Left lung (tissue), 14 donors: ENCODE measurements at regions of chr2 and their contacts with region 1.

Region 1: DNA sequence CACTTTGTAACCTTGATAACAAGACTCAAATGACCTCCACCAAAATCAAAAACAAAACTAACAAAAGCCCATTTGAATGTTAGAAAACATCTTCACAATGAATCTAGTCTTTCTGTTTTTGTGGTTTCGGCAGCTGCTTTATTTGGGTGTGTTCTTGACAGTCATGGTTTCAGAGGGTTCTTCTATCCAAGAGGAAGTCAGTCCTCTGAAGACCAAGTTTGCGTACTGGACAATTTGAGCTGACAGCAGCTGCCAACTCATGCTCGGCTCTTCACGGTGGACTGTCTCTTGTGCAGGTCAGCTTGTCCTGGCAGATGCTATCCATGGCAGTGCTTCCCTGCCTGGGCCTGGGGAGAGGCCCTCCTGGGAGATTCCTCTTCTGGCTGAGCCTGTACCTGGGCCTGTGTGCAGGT is 91.0 kb downstream of the TMEM17 start:
- DNase-seq: no peak
- ATAC-seq: no peak
- H3K4me3 ChIP-seq: no peak overlapping the region
- H3K27ac ChIP-seq: no peak overlapping the region
- H3K4me1 ChIP-seq: peaks cover 6 to 12% of the 10 kb centered on the region in 2 donors
- H3K27me3 ChIP-seq: no peaks in the 10 kb centered on the region
- CTCF ChIP-seq: no peak

Region 2: DNA sequence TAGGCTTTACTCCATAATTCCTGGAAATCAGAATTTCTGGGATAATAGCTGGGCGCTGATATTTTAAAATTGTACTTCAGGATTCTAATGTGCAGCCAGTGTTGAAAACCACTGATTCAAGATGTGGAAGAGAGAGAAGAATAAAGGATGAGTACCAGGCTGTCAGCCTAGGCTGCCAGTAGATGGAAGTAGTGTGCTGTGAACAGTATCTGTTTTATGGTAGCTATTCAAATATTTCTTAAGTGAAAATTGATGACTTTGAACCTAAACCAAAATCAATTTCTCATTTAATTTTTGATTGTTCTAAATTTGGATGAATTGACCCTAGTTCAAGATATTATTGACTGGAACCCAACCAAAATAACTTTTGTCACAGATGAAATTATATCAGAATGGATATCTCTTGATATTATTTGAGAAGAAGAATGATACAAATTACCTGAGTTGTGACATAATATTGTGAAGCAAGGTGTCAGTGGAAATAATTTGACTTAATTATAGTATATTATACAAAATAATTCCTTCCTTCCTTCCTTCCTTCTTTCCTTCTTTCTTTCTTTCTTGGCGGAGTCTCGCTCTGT is 421.5 kb before region 1 on chr2:
- intact Hi-C with region 1: loop called in 1 of 2 experiments (anchors 10 kb)
- DNase-seq: peak in 1 of 4 donors; percentile 68
- ATAC-seq: peak; percentile 79
- H3K4me3 ChIP-seq: no peak overlapping the region
- H3K27ac ChIP-seq: no peak overlapping the region
- H3K4me1 ChIP-seq: peaks cover 0 to 12% of the 10 kb centered on the region in 2 donors
- H3K27me3 ChIP-seq: no peaks in the 10 kb centered on the region
- CTCF ChIP-seq: peak; percentile 29 to 44

Region 3: DNA sequence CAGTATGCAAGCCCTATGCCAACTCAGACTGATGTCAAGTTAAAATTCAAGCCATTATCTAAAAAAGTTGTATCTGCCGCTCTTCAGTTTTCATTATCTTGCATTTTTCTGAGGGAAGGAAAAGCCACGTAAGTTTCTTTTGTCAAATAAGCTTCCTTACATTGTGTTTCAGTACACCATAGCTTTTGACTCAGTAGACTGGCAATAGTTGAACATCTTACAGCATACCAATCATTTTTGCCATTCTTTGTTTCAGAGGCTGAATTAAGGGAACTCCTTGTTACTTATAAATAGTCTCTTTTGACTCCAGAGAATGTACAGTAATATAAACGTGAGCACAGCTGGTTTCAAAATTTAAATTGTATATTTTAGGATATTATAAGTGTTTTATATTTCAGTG is 411.1 kb after region 1 on chr2:
- intact Hi-C with region 1: no loop called
- DNase-seq: no peak
- ATAC-seq: peak; percentile 30
- H3K4me3 ChIP-seq: no peak overlapping the region
- H3K27ac ChIP-seq: no peak overlapping the region
- H3K4me1 ChIP-seq: peaks cover 4 to 5% of the 10 kb centered on the region in 2 donors
- H3K27me3 ChIP-seq: no peaks in the 10 kb centered on the region
- CTCF ChIP-seq: no peak